CD4-positive, alpha-beta T cell (primary cell): ENCODE measurements at regions of chr14 and their contacts with region 1.

Region 1: GRCh38 chr14:59189786-59190771 is 1.6 kb downstream of the DAAM1 start:
- DNase-seq: peak; percentile 28 to 91 (median 56)
- ATAC-seq: no peak
- H3K4me3 ChIP-seq: peak overlapping the region; percentile 83
- H3K4me3 Mint-ChIP-seq: peak overlapping the region; percentile 99
- H3K27ac ChIP-seq: peak overlapping the region; percentile 84 to 87
- H3K27ac Mint-ChIP-seq: peak overlapping the region; percentile 94
- H3K4me1 ChIP-seq: peaks cover 20% of the 10 kb centered on the region
- H3K4me1 Mint-ChIP-seq: peaks cover 29% of the 10 kb centered on the region
- H3K27me3 ChIP-seq: no peaks in the 10 kb centered on the region
- H3K27me3 Mint-ChIP-seq: no peaks in the 10 kb centered on the region
- CTCF ChIP-seq: no peak

Region 2: DNA sequence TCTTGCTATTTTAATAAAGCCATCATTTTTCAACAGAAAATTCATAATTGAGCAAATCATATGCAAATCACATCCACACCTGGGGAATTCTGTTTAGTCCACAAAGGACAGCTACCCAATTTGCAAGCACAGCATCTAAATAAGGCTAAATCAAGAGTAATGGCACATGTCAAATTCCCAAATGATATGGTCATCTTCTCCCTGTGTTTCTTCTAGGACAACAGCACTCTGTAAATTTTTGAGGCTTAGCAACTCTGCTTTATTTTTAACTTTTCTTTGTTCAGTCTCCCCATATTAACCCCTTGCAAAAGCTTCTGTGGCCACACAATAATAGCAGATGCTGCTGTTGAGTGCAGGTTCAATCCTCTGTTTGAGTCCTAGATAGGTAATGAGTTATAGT is 157.3 kb before region 1 on chr14:
- CTCF ChIA-PET with region 1: no interaction called
- POLR2A ChIA-PET with region 1: no interaction called
- intact Hi-C with region 1: no loop called
- DNase-seq: no peak
- ATAC-seq: no peak
- H3K4me3 ChIP-seq: no peak overlapping the region
- H3K4me3 Mint-ChIP-seq: no peak overlapping the region
- H3K27ac ChIP-seq: no peak overlapping the region
- H3K27ac Mint-ChIP-seq: no peak overlapping the region
- H3K4me1 ChIP-seq: no peaks in the 10 kb centered on the region
- H3K4me1 Mint-ChIP-seq: no peaks in the 10 kb centered on the region
- H3K27me3 ChIP-seq: no peaks in the 10 kb centered on the region
- H3K27me3 Mint-ChIP-seq: peaks cover 12% of the 10 kb centered on the region
- CTCF ChIP-seq: no peak

Region 3: DNA sequence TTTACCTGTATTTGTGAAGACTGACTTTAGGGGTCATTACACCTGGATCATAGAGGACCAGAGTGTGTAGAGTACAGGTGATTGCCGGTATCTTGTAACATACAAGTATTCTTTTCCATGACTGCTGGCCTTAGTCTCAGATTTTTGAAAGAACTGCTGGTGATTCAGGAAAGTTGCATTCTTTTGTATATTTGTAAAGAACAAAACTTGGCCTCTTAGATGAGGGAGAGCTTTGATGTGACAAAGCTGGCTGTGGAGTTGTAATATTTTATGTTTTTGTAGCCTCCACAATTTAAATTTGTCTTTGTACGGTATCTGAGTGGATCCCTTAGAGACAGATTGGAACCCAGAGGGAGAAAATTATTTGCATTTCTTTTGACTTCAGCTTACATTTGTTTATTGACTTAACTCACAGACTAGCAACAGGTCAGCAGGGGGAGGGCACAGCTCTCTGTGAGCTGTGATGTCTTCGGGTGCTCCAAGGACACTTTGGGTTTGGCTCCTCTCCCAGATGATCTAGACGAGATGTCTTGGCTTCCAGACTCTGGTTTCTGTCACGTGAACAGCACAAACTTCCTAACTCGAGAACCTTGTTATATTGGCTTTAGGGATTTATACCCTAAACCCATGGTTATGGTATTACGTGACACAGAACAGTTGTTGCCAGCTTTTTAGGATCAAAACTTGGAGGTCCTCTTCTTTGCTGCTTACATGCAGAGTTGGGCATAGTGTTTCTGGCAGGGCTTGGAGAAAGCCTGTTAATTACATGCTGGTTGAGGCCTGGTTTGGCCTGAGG is 64.3 kb after region 1 on chr14:
- CTCF ChIA-PET with region 1: no interaction called
- POLR2A ChIA-PET with region 1: no interaction called
- intact Hi-C with region 1: no loop called
- DNase-seq: no peak
- ATAC-seq: no peak
- H3K4me3 ChIP-seq: no peak overlapping the region
- H3K4me3 Mint-ChIP-seq: no peak overlapping the region
- H3K27ac ChIP-seq: no peak overlapping the region
- H3K27ac Mint-ChIP-seq: no peak overlapping the region
- H3K4me1 ChIP-seq: no peaks in the 10 kb centered on the region
- H3K4me1 Mint-ChIP-seq: no peaks in the 10 kb centered on the region
- H3K27me3 ChIP-seq: no peaks in the 10 kb centered on the region
- H3K27me3 Mint-ChIP-seq: no peaks in the 10 kb centered on the region
- CTCF ChIP-seq: no peak

Region 4: GRCh38 chr14:59464486-59465315 is 274.6 kb after region 1 on chr14:
- CTCF ChIA-PET with region 1: no interaction called
- POLR2A ChIA-PET with region 1: interaction called, 7 read pairs
- intact Hi-C with region 1: loop called in 1 of 2 experiments (anchors 5 kb)
- DNase-seq: peak; percentile 19 to 85 (median 50)
- ATAC-seq: peak; percentile 76
- H3K4me3 ChIP-seq: peak overlapping the region; percentile 56
- H3K4me3 Mint-ChIP-seq: peak overlapping the region; percentile 94
- H3K27ac ChIP-seq: no peak overlapping the region
- H3K27ac Mint-ChIP-seq: peak overlapping the region; percentile 54
- H3K4me1 ChIP-seq: peaks cover 15% of the 10 kb centered on the region
- H3K4me1 Mint-ChIP-seq: peaks cover 8% of the 10 kb centered on the region
- H3K27me3 ChIP-seq: no peaks in the 10 kb centered on the region
- H3K27me3 Mint-ChIP-seq: peaks cover 10% of the 10 kb centered on the region
- CTCF ChIP-seq: no peak